Calu3 (cell line): ENCODE measurements at regions of chr6 and their contacts with region 1.

Region 1: DNA sequence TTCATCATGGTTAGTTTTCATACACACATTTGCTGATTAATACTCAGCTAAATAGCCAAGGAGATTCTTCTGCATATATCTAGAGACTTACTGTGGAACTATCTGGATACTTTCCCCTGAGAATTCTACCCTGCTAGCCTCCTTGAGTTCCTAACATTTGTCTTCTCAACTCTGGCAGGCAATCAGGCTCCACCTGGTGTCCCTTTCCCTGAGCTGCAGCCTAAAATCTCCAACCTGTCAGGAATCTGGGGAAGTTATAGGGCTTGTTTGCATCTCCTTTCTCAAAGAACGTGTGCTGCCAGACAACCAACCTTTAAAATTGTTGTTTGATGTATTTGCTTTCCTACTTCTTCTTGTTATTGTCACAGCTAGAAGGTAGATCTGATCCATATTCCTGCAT is 73.4 kb downstream of the FUT9 start:
- DNase-seq: peak; percentile 39
- H3K4me3 Mint-ChIP-seq: no peak overlapping the region
- H3K27ac Mint-ChIP-seq: no peak overlapping the region
- H3K4me1 Mint-ChIP-seq: peaks cover under 1% of the 10 kb centered on the region
- H3K27me3 Mint-ChIP-seq: no peaks in the 10 kb centered on the region
- CTCF ChIP-seq: peak; percentile 59

Region 2: GRCh38 chr6:95364016-95364604 is 725.1 kb before region 1 on chr6:
- CTCF ChIA-PET with region 1: no interaction called
- intact Hi-C with region 1: loop called (anchors 2 kb)
- DNase-seq: no peak
- H3K4me3 Mint-ChIP-seq: no peak overlapping the region
- H3K27ac Mint-ChIP-seq: no peak overlapping the region
- H3K4me1 Mint-ChIP-seq: peaks cover 8% of the 10 kb centered on the region
- H3K27me3 Mint-ChIP-seq: no peaks in the 10 kb centered on the region
- CTCF ChIP-seq: no peak

Region 3: DNA sequence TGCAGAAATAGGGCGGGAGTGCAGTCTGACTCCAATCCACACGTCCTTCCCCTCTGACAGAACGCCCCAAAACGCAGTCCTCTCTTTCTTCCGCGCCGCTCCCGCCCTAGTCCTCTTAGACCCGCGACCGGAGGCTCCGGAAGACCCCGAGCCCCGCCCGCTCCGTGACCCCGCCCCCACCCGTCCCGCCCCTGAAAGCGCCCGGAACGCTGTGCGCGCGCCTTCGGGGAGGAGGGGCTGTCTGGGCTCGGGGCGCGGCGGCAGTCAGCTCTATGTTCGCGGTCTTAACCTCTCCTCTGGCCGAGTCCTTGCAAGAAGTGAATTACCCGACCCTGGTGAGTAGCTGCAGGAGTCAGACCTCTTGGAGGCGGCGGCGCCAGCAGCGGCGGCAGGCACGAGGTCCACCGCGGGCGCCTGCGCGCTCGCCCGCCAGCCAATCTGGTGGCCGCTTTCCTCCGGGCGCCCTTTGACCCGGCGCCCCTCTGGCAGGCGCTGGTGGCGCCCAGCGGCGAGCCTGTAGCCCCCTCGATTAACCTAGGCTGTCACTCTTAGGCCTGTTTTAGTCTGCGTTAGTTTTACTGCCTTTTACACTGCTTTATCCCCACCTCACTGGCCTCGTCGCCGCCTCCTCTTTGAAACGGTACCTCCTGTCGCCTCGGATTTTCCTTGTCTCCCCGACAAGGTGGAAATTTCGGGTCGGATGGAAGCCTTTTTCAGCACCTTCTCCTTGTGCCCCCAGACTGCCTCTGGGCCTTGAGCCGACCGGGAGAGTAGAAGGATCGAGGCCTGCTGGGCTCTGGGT is 511.7 kb before region 1 on chr6 and contains the start of gene MANEA:
- CTCF ChIA-PET with region 1: no interaction called
- intact Hi-C with region 1: loop called (anchors 10 kb)
- DNase-seq: peak; percentile 78
- H3K4me3 Mint-ChIP-seq: peak within 1 kb of the TSS; percentile 93
- H3K27ac Mint-ChIP-seq: peak within 1 kb of the TSS; percentile 96
- H3K4me1 Mint-ChIP-seq: peaks cover 15% of the 10 kb centered on the region
- H3K27me3 Mint-ChIP-seq: no peaks in the 10 kb centered on the region
- CTCF ChIP-seq: no peak
- total RNA-seq, gene MANEA: 12.4 and 22.6 TPM in 2 replicates

Region 4: DNA sequence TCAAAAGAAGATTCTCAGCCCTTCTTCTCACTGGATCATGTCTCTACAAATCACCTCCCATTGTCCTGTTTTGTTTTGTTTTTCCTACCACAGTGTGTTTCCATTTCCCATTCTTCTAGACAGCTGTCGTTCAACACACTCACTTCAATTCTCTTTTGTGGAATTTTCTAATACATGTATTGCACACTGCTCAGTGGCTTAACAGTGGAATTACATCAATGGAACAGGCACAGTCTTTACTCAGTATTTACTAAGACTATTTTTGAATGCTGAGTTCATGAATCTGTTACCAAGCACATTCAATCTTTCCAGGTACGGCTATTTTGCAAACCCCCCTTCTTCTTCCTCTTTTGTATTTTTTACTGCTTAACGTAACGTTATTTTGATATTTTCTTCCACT is 316.0 kb before region 1 on chr6:
- CTCF ChIA-PET with region 1: interaction called, 3 read pairs
- intact Hi-C with region 1: loop called (anchors 10 kb)
- DNase-seq: no peak
- H3K4me3 Mint-ChIP-seq: no peak overlapping the region
- H3K27ac Mint-ChIP-seq: no peak overlapping the region
- H3K4me1 Mint-ChIP-seq: peaks cover 13% of the 10 kb centered on the region
- H3K27me3 Mint-ChIP-seq: no peaks in the 10 kb centered on the region
- CTCF ChIP-seq: no peak

Region 5: GRCh38 chr6:95948324-95948723 is 140.8 kb before region 1 on chr6:
- CTCF ChIA-PET with region 1: no interaction called
- intact Hi-C with region 1: loop called (anchors 10 kb)
- DNase-seq: no peak
- H3K4me3 Mint-ChIP-seq: peak overlapping the region; percentile 21
- H3K27ac Mint-ChIP-seq: peak overlapping the region; percentile 3
- H3K4me1 Mint-ChIP-seq: peaks cover 21% of the 10 kb centered on the region
- H3K27me3 Mint-ChIP-seq: no peaks in the 10 kb centered on the region
- CTCF ChIP-seq: no peak